ENCODE measurements at regions of chr17 and their contacts with region 1.

Region 1: GRCh38 chr17:66301797-66302741 is at the start of gene PRKCA:
- DNase-seq: peak; percentile 77
- H3K4me3 Mint-ChIP-seq: peak within 1 kb of the TSS; percentile 100
- H3K27ac Mint-ChIP-seq: peak within 1 kb of the TSS; percentile 99
- H3K4me1 Mint-ChIP-seq: peaks cover 48% of the 10 kb centered on the region
- H3K27me3 Mint-ChIP-seq: peaks cover 9% of the 10 kb centered on the region
- total RNA-seq, gene PRKCA: 155 and 157 TPM in 2 replicates

Region 2: DNA sequence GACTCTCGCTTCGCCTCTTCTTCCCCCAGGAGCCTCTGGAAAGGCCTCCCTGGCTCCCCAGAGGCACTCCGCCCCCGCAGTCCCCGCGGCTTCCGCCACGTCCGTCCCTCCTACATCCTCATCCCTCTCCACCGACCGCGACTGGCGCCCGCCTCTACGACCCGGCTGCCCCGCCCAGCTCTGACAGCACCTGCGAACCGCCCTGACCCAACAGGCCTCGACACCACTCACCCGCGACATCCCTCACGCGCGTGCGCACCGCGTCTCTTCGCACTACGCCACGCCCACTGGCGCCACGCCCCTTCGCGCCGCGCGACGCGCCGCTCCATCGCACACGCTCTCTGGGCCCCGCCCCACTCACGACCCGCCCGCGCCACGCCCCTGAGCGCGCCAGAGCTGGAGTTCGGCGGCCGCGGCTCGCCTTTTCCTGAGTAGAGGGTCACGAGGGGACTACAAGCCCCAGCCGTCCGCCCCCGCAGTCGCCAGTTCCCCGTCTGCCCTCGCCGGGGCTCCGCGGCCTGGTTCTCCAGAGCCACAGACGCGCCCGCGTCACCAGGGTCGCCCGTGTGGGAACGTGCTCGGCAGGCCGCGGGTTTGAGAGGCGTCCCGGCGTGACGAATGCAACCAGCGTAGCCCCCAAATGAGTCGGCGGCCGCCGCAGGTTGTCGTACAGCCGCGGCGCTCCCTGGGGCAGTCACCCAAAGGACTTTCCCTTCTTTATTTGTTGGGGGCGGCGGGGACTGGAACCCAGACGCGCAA is 1326.6 kb before region 1 on chr17:
- intact Hi-C with region 1: loop called (anchors 10 kb)
- DNase-seq: peak; percentile 98
- H3K4me3 Mint-ChIP-seq: peak overlapping the region; percentile 74
- H3K27ac Mint-ChIP-seq: peak overlapping the region; percentile 99
- H3K4me1 Mint-ChIP-seq: peaks cover 60% of the 10 kb centered on the region
- H3K27me3 Mint-ChIP-seq: no peaks in the 10 kb centered on the region

Region 3: GRCh38 chr17:66255112-66255511 is 47.0 kb before region 1 on chr17:
- intact Hi-C with region 1: loop called (anchors 1 kb)
- DNase-seq: peak; percentile 26
- H3K4me3 Mint-ChIP-seq: no peak overlapping the region
- H3K27ac Mint-ChIP-seq: peak overlapping the region; percentile 76
- H3K4me1 Mint-ChIP-seq: peaks cover 20% of the 10 kb centered on the region
- H3K27me3 Mint-ChIP-seq: no peaks in the 10 kb centered on the region

Region 4: GRCh38 chr17:66348584-66349165 is 46.6 kb after region 1 on chr17:
- intact Hi-C with region 1: loop called (anchors 1 kb)
- DNase-seq: no peak
- H3K4me3 Mint-ChIP-seq: peak overlapping the region; percentile 62
- H3K27ac Mint-ChIP-seq: peak overlapping the region; percentile 45
- H3K4me1 Mint-ChIP-seq: peaks cover 62% of the 10 kb centered on the region
- H3K27me3 Mint-ChIP-seq: no peaks in the 10 kb centered on the region

Region 5: DNA sequence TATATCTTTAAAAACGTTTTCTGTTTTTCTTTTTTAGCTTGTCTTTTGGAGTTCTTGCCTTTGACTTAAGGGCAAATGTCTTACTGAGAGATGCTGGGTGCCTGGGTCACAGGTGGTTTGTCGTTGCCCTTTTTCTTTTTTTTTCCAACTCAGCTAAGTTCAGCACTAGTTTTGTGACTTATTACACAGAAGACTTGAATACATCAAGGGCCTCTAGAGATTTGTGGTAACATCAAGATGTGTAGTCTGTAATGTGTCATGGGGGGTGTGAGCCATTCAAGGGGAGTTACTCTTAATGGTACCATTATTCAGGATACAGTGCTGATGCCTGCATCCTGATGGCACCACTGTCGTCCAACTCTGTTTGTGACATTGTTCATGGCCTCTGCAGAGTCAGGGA is 95.4 kb after region 1 on chr17:
- intact Hi-C with region 1: loop called (anchors 1 kb)
- DNase-seq: no peak
- H3K4me3 Mint-ChIP-seq: no peak overlapping the region
- H3K27ac Mint-ChIP-seq: peak overlapping the region; percentile 69
- H3K4me1 Mint-ChIP-seq: peaks cover 80% of the 10 kb centered on the region
- H3K27me3 Mint-ChIP-seq: no peaks in the 10 kb centered on the region

Region 6: DNA sequence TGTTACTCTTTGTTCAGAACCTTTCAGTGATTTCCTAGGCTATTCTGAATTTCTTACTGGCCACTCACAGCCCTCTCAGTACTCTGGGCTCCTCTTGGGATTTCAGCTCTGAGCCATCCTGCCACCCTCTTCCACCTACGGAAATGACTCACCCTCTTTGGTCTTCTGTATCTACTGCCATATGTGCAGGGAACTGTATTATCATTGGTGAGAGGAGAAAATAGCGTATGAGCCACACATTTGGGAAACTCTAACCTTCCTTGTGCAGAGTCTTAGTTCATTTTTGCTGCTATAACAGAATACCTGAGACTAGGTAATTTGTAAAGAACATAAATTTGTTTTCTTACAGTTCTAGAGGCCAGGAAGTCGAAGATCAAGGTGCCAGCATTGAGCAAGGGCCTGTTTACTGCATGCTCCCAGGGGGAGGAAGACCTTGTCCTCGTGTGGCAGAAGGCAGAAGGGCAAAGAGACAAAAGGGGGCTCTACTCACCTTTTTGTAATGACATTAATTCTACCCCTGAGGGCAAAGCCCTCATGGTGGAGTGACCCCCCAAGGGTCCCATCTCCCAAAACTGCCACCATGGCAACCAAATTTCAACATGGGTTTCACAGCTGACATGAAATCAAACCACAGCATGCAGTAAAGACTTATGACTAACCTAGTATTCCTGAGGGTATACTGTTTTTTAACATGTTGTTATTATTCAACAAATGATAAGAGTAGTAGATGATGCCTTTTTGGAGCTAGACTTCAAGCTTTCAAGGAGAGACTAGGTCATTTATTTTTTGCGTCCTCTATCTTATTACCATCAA is 192.1 kb after region 1 on chr17:
- intact Hi-C with region 1: no loop called
- DNase-seq: no peak
- H3K4me3 Mint-ChIP-seq: peak overlapping the region; percentile 19
- H3K27ac Mint-ChIP-seq: peak overlapping the region; percentile 71
- H3K4me1 Mint-ChIP-seq: peaks cover 46% of the 10 kb centered on the region
- H3K27me3 Mint-ChIP-seq: no peaks in the 10 kb centered on the region

Region 7: GRCh38 chr17:66508896-66509843 is 207.1 kb after region 1 on chr17:
- intact Hi-C with region 1: loop called (anchors 1 kb)
- DNase-seq: peak; percentile 29
- H3K4me3 Mint-ChIP-seq: peak overlapping the region; percentile 77
- H3K27ac Mint-ChIP-seq: peak overlapping the region; percentile 97
- H3K4me1 Mint-ChIP-seq: peaks cover 82% of the 10 kb centered on the region
- H3K27me3 Mint-ChIP-seq: no peaks in the 10 kb centered on the region

Region 8: GRCh38 chr17:66633317-66633965 is 331.4 kb after region 1 on chr17:
- intact Hi-C with region 1: loop called (anchors 1 kb)
- DNase-seq: peak; percentile 66
- H3K4me3 Mint-ChIP-seq: peak overlapping the region; percentile 41
- H3K27ac Mint-ChIP-seq: peak overlapping the region; percentile 85
- H3K4me1 Mint-ChIP-seq: peaks cover 78% of the 10 kb centered on the region
- H3K27me3 Mint-ChIP-seq: no peaks in the 10 kb centered on the region